ENCODE measurements at regions of chr2 and their contacts with region 1.

Region 1: GRCh38 chr2:67650291-67651133 is 253.4 kb downstream of the ETAA1 start:
- DNase-seq: peak; percentile 67
- H3K4me3 ChIP-seq: no peak overlapping the region
- H3K27ac ChIP-seq: no peak overlapping the region
- H3K4me1 ChIP-seq: peaks cover 8% of the 10 kb centered on the region
- H3K27me3 ChIP-seq: no peaks in the 10 kb centered on the region
- CTCF ChIP-seq: peak; percentile 80 to 91

Region 2: DNA sequence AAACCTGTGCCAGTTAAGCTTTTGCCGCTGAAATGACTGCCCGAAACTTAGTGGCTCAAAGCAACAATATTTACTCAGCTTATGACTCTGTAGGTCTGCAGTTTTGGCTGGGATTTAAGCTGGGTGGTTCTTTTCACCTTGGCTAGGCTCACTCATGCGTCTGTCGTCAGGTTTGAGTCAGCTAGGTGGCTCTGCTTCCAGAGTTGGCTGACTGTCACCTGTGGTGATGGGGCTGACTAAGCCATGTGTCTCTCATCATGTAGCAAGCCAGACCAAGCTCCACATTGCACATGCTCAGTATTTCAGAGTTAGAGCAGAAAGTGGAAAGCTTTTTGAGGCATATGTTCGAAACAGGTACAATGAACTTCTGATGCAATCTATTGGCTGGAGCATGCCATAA is 860.8 kb before region 1 on chr2:
- CTCF ChIA-PET with region 1: interaction called, 4 read pairs
- dilution Hi-C with region 1: no loop called
- in situ Hi-C with region 1: no loop called
- intact Hi-C with region 1: loop called (anchors 10 kb)
- DNase-seq: peak; percentile 62
- H3K4me3 ChIP-seq: no peak overlapping the region
- H3K27ac ChIP-seq: no peak overlapping the region
- H3K4me1 ChIP-seq: no peaks in the 10 kb centered on the region
- H3K27me3 ChIP-seq: no peaks in the 10 kb centered on the region
- CTCF ChIP-seq: no peak

Region 3: GRCh38 chr2:67234439-67234838 is 416.1 kb before region 1 on chr2:
- CTCF ChIA-PET with region 1: no interaction called
- dilution Hi-C with region 1: no loop called
- in situ Hi-C with region 1: no loop called
- intact Hi-C with region 1: loop called (anchors 1 kb)
- DNase-seq: peak; percentile 17
- H3K4me3 ChIP-seq: no peak overlapping the region
- H3K27ac ChIP-seq: no peak overlapping the region
- H3K4me1 ChIP-seq: no peaks in the 10 kb centered on the region
- H3K27me3 ChIP-seq: no peaks in the 10 kb centered on the region
- CTCF ChIP-seq: peak in 1 of 2 donors; percentile 53

Region 4: GRCh38 chr2:67346718-67347407 is 303.6 kb before region 1 on chr2:
- CTCF ChIA-PET with region 1: no interaction called
- dilution Hi-C with region 1: no loop called
- in situ Hi-C with region 1: no loop called
- intact Hi-C with region 1: loop called (anchors 10 kb)
- DNase-seq: peak; percentile 75
- H3K4me3 ChIP-seq: no peak overlapping the region
- H3K27ac ChIP-seq: peak overlapping the region; percentile 29
- H3K4me1 ChIP-seq: peaks cover 12% of the 10 kb centered on the region
- H3K27me3 ChIP-seq: no peaks in the 10 kb centered on the region
- CTCF ChIP-seq: no peak

Region 5: GRCh38 chr2:67476809-67477790 is 173.4 kb before region 1 on chr2:
- CTCF ChIA-PET with region 1: no interaction called
- dilution Hi-C with region 1: no loop called
- in situ Hi-C with region 1: no loop called
- intact Hi-C with region 1: loop called (anchors 1 kb)
- DNase-seq: peak; percentile 41
- H3K4me3 ChIP-seq: no peak overlapping the region
- H3K27ac ChIP-seq: no peak overlapping the region
- H3K4me1 ChIP-seq: no peaks in the 10 kb centered on the region
- H3K27me3 ChIP-seq: no peaks in the 10 kb centered on the region
- CTCF ChIP-seq: peak; percentile 52 to 72

Region 6: DNA sequence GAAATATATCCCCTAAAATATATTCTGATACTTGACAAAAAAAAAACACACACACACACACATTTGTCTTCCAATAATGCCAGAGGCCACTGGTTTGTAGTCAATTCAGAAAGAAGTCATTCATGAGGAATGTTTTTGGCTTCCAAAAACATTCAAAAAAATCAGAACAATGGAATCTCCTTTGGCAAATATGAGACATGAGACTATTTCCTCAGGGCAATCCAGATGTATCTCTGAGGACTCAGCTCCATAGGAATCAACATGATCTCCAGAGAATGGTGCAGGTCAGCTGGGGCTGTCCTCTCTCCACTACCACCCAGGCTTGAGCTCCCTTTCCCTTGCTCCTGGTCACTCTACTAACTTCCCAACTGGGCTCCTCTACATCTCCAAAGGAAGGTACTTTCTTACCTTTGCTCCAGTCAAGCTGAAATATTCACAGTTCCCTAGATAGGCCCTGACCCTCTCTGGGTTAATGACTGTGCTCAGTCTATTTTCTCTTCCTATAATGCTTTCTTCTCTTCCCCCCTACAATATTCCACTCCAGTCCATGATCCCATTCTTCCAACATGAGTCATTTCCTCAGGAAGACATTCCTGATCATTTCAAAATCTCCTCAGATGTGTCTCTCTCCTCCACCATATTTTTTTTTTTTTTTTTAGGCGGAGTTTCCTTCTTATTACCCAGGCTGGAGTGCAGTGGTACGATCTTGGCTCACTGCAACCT is 267.0 kb after region 1 on chr2:
- CTCF ChIA-PET with region 1: no interaction called
- dilution Hi-C with region 1: no loop called
- in situ Hi-C with region 1: no loop called
- intact Hi-C with region 1: no loop called
- DNase-seq: peak; percentile 86
- H3K4me3 ChIP-seq: no peak overlapping the region
- H3K27ac ChIP-seq: peak overlapping the region; percentile 86
- H3K4me1 ChIP-seq: peaks cover 19% of the 10 kb centered on the region
- H3K27me3 ChIP-seq: no peaks in the 10 kb centered on the region
- CTCF ChIP-seq: no peak